Activated CD8-positive, alpha-beta T cell treated with anti-CD3 and anti-CD28 coated beads, Interleukin-2, amount 10 ng/mL, durations not matched to agents 7 days and 5 days (primary cell): ENCODE measurements at regions of chr6 and their contacts with region 1.

Region 1: GRCh38 chr6:32971581-32972352 is 3.4 kb downstream of the BRD2 start:
- DNase-seq: peak; percentile 100
- ATAC-seq: peak; percentile 50
- H3K4me3 Mint-ChIP-seq: peak overlapping the region; percentile 96
- H3K27ac Mint-ChIP-seq: peak overlapping the region; percentile 98
- H3K4me1 Mint-ChIP-seq: peaks cover 24% of the 10 kb centered on the region
- H3K27me3 Mint-ChIP-seq: no peaks in the 10 kb centered on the region

Region 2: GRCh38 chr6:32529697-32530429 is 441.9 kb before region 1 on chr6 and contains the start of gene HLA-DRB5:
- CTCF ChIA-PET with region 1: no interaction called
- POLR2A ChIA-PET with region 1: no interaction called
- DNase-seq: peak; percentile 21
- ATAC-seq: peak; percentile 47
- H3K4me3 Mint-ChIP-seq: peak within 1 kb of the TSS; percentile 57
- H3K27ac Mint-ChIP-seq: peak within 1 kb of the TSS; percentile 46
- H3K4me1 Mint-ChIP-seq: peaks cover 5% of the 10 kb centered on the region
- H3K27me3 Mint-ChIP-seq: peaks cover 18% of the 10 kb centered on the region
- total RNA-seq, gene HLA-DRB5: 15.0 to 16.9 TPM

Region 3: GRCh38 chr6:32853541-32854375 is 118.0 kb before region 1 on chr6 and contains the starts of genes PSMB9 and TAP1:
- CTCF ChIA-PET with region 1: interaction called, 13 read pairs
- POLR2A ChIA-PET with region 1: interaction called, 139 read pairs
- DNase-seq: peak; percentile 97
- ATAC-seq: peak; percentile 85
- H3K4me3 Mint-ChIP-seq: peak within 1 kb of the TSS; percentile 97
- H3K27ac Mint-ChIP-seq: peak within 1 kb of the TSS; percentile 100
- H3K4me1 Mint-ChIP-seq: peaks cover 58% of the 10 kb centered on the region
- H3K27me3 Mint-ChIP-seq: no peaks in the 10 kb centered on the region
- total RNA-seq, gene PSMB9: 319 to 325 TPM
- total RNA-seq, gene TAP1: 319 to 328 TPM

Region 4: DNA sequence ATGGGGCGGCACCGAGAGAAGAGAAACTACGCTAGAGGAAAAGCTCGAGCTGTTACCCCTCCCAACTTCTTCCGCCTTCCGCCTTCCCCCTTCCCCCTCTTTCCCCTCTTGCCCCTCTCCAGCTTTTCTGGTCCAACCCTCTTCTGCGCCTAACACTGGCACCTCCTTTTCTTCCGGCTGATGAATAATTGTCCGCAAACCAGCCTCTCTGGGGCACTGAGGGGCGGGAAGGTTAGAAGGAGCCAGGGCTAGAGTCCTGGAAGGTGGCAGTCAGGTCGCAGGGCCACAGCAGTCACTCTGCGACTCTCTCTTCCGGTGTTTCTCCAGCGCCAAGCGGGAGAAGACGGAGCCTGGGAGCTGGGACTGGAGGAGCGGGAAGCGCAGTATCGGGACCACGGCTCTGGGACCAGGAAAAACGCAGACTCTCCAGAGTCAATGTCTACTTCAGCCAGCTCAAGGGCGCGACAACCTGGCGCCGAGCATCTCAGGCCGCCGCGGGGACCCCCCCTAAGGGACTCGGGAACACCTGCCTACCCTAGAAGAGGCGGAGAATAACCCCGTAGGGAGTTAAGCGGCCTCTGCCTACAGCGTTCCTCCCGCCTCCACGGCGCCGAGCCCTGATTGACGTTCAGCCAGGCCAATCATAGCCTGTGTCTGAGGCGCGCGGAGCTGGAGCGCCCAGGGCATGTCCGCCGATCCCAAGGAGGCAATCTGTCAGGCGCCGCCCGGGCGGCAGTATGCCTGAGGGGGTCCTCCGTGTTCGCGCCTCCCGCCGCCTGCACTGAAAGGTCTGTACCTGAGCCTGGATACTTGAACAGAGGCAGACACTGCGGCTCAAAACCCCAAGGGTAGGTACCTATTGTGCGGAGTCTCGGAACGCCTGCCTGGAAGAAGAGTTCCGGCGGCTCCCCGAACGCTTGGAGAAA is 77.4 kb before region 1 on chr6:
- CTCF ChIA-PET with region 1: interaction called, 11 read pairs
- POLR2A ChIA-PET with region 1: interaction called, 118 read pairs
- DNase-seq: peak; percentile 94
- ATAC-seq: peak; percentile 99
- H3K4me3 Mint-ChIP-seq: peak overlapping the region; percentile 98
- H3K27ac Mint-ChIP-seq: peak overlapping the region; percentile 94
- H3K4me1 Mint-ChIP-seq: peaks cover 37% of the 10 kb centered on the region
- H3K27me3 Mint-ChIP-seq: peaks cover 10% of the 10 kb centered on the region

Region 5: DNA sequence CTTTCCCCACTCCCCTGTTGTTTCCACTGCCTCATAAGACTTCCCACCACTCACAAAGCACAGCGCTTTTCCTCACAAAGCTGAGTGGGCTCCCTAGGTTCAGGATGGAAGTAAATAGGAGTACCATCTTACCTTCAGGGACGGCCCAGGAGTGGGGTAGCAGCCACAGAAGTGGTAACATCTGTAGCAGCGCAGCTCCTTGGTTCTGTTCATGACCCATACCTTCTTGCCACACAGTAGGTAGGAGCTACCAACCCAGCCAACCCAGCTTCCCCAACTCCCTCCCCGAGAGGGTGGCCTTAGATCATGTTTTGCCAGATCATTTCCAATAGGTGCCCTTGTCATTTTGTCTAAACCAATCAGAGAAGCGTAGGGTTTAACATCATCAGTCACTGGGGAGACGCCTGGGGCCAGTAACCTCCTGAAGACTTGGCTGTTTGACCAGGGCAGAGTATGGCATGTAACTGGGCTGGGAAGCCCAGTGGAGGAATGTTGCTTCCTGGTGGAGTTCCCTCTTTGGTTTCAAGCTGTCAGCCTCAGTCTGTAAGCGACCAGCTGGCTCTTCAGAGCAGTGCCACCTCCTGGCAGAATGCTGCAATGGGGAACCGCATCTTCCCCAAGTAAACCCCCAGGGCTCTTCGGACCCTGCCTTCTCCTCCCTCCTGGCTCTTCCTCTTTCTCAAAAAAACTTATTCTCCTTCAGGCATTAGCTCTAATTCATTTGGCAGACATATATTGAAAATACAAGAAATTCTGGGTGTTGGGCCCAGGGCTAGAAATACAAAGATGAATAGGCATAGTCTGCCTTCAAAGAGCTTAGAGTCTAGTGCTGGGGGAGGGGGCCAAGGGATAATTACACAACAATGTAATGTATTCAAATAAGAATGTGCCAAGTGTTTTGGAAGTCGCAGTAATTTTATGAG is 18.7 kb before region 1 on chr6 and contains the start of gene HLA-DMA:
- CTCF ChIA-PET with region 1: interaction called, 442 read pairs
- POLR2A ChIA-PET with region 1: interaction called, 307 read pairs
- DNase-seq: peak; percentile 85
- ATAC-seq: peak; percentile 98
- H3K4me3 Mint-ChIP-seq: peak within 1 kb of the TSS; percentile 77
- H3K27ac Mint-ChIP-seq: peak within 1 kb of the TSS; percentile 83
- H3K4me1 Mint-ChIP-seq: peaks cover 62% of the 10 kb centered on the region
- H3K27me3 Mint-ChIP-seq: no peaks in the 10 kb centered on the region
- total RNA-seq, gene HLA-DMA: 28.6 to 30.5 TPM

Region 6: GRCh38 chr6:33008944-33009861 is 37.4 kb after region 1 on chr6 and contains the start of gene HLA-DOA:
- CTCF ChIA-PET with region 1: no interaction called
- POLR2A ChIA-PET with region 1: interaction called, 10 read pairs
- DNase-seq: peak; percentile 74
- ATAC-seq: peak; percentile 94
- H3K4me3 Mint-ChIP-seq: peak within 1 kb of the TSS; percentile 72
- H3K27ac Mint-ChIP-seq: peak within 1 kb of the TSS; percentile 22
- H3K4me1 Mint-ChIP-seq: peaks cover 22% of the 10 kb centered on the region
- H3K27me3 Mint-ChIP-seq: peaks cover 6% of the 10 kb centered on the region
- total RNA-seq, gene HLA-DOA: 3.3 to 4.2 TPM

Region 7: GRCh38 chr6:33248925-33249731 is 277.4 kb after region 1 on chr6:
- CTCF ChIA-PET with region 1: no interaction called
- POLR2A ChIA-PET with region 1: interaction called, 13 read pairs
- DNase-seq: peak; percentile 98
- ATAC-seq: peak; percentile 95
- H3K4me3 Mint-ChIP-seq: peak overlapping the region; percentile 88
- H3K27ac Mint-ChIP-seq: peak overlapping the region; percentile 92
- H3K4me1 Mint-ChIP-seq: peaks cover 37% of the 10 kb centered on the region
- H3K27me3 Mint-ChIP-seq: peaks cover 3% of the 10 kb centered on the region